Psoas muscle (tissue), 8 donors: ENCODE measurements at regions of chr2 and their contacts with region 1.

Region 1: GRCh38 chr2:182186132-182186735 is 200.6 kb downstream of the PPP1R1C start:
- DNase-seq: no peak
- ATAC-seq: peak in 1 of 4 donors; percentile 37
- H3K4me3 ChIP-seq: no peak overlapping the region
- H3K27ac ChIP-seq: no peak overlapping the region
- H3K4me1 ChIP-seq: no peaks in the 10 kb centered on the region
- H3K27me3 ChIP-seq: no peaks in the 10 kb centered on the region
- CTCF ChIP-seq: peak; percentile 77

Region 2: DNA sequence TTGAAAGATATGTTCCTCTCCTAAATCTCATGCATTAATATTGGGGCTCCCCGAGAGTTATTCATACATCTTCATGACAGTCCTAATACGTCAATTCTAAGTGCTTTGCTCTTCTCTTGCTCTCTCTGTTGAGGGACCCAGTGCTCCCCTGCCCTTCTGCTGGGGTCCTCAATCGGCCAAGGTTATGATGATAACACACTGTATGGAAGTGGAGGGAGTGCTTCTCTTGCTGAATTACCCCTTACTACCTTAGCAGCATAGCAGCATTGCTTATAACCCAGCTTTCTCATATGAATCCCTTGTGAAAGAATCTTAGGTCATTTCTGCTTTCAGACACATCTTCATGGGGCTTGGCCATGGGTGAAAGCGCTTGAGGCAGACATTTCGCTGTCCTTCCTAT is 251.5 kb before region 1 on chr2:
- intact Hi-C with region 1: no loop called
- DNase-seq: no peak
- ATAC-seq: no peak
- H3K4me3 ChIP-seq: no peak overlapping the region
- H3K27ac ChIP-seq: no peak overlapping the region
- H3K4me1 ChIP-seq: no peaks in the 10 kb centered on the region
- H3K27me3 ChIP-seq: no peaks in the 10 kb centered on the region
- CTCF ChIP-seq: no peak

Region 3: DNA sequence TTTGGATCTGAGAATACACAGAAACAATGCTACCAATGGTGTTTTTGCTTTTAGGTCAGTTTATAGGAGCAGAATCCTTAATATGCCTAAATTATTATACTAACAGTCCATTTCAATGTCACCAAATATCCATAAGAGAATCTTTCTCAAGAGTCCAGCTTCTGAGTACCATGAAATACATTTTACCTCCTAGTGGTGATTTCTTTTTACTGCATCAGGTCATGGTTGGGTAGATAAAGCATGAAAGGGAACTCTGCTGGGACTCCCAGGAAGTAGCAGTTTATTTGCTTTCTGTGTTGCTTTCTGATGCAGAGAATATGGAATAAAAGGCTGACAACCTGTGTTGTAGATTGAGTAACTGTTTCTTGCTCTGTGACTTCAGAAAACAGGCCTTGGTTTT is 85.0 kb before region 1 on chr2:
- intact Hi-C with region 1: no loop called
- DNase-seq: no peak
- ATAC-seq: no peak
- H3K4me3 ChIP-seq: no peak overlapping the region
- H3K27ac ChIP-seq: no peak overlapping the region
- H3K4me1 ChIP-seq: no peaks in the 10 kb centered on the region
- H3K27me3 ChIP-seq: no peaks in the 10 kb centered on the region
- CTCF ChIP-seq: no peak

Region 4: GRCh38 chr2:182650704-182651103 is 464.5 kb after region 1 on chr2:
- intact Hi-C with region 1: loop called (anchors 5 kb)
- DNase-seq: no peak
- ATAC-seq: peak in 2 of 4 donors; percentile 46 to 54
- H3K4me3 ChIP-seq: no peak overlapping the region
- H3K27ac ChIP-seq: no peak overlapping the region
- H3K4me1 ChIP-seq: no peaks in the 10 kb centered on the region
- H3K27me3 ChIP-seq: no peaks in the 10 kb centered on the region
- CTCF ChIP-seq: peak; percentile 40